HEK293 (cell line): ENCODE measurements at regions of chr6 and their contacts with region 1.

Region 1: DNA sequence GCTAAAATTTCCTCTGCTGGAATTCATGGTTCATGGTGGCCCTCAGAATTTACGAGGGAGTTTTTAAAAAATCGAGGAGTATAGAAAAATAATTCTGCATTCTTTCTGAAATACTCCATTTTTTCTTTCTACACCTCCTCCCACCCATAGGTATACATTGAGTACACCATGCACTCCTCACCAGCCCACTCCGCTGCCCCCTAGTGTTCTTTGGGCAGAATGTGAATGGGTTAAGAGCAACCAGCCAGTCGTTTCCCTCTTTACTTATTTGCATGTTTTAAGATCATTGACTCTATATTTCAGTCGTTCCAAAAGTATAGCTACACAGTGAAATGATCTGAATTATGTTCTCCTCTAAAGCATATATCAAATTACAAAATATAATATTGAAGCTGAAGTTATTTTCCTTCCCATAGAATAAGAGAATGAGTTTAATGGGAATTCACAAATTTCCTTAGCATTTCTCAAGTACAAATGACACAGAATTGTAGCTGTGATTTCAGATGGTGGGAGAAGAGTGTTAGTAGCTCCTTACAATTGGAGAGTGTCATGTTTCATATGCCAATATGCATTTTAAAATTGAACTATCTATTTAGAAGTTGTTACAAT is 977.7 kb upstream of the SLC35B3 start:
- H3K4me3 ChIP-seq: no peak overlapping the region
- H3K27ac ChIP-seq: no peak overlapping the region
- H3K4me1 ChIP-seq: peaks cover 10% of the 10 kb centered on the region
- CTCF ChIP-seq: no peak

Region 2: GRCh38 chr6:9266741-9267140 is 146.3 kb before region 1 on chr6:
- CTCF ChIA-PET with region 1: no interaction called
- POLR2A ChIA-PET with region 1: no interaction called
- H3K4me3 ChIP-seq: no peak overlapping the region
- H3K27ac ChIP-seq: no peak overlapping the region
- H3K4me1 ChIP-seq: no peaks in the 10 kb centered on the region
- CTCF ChIP-seq: no peak

Region 3: DNA sequence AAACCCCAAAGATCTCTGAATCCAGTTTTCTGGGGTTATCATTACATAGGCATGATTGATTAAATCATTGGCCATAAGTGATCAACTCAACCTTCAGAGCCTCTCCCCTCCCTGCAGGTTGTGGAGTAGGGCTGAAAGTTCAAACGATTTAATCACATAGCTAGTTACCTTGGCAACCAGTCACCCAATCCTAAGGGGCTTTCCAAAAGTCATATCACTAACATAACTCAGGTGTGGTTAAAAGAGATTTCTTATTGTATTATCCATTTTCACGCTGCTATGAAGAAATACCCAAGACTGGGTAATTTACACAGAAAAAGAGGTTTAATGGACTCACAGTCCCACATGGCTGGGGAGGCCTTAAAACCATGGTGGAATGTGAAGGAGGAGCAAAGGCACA is 42.6 kb before region 1 on chr6:
- CTCF ChIA-PET with region 1: no interaction called
- POLR2A ChIA-PET with region 1: no interaction called
- H3K4me3 ChIP-seq: no peak overlapping the region
- H3K27ac ChIP-seq: no peak overlapping the region
- H3K4me1 ChIP-seq: no peaks in the 10 kb centered on the region
- CTCF ChIP-seq: no peak

Region 4: GRCh38 chr6:9401960-9402359 is 11.1 kb before region 1 on chr6:
- CTCF ChIA-PET with region 1: interaction called, 11 read pairs
- POLR2A ChIA-PET with region 1: no interaction called
- H3K4me3 ChIP-seq: no peak overlapping the region
- H3K27ac ChIP-seq: no peak overlapping the region
- H3K4me1 ChIP-seq: peaks cover 34% of the 10 kb centered on the region
- CTCF ChIP-seq: no peak

Region 5: DNA sequence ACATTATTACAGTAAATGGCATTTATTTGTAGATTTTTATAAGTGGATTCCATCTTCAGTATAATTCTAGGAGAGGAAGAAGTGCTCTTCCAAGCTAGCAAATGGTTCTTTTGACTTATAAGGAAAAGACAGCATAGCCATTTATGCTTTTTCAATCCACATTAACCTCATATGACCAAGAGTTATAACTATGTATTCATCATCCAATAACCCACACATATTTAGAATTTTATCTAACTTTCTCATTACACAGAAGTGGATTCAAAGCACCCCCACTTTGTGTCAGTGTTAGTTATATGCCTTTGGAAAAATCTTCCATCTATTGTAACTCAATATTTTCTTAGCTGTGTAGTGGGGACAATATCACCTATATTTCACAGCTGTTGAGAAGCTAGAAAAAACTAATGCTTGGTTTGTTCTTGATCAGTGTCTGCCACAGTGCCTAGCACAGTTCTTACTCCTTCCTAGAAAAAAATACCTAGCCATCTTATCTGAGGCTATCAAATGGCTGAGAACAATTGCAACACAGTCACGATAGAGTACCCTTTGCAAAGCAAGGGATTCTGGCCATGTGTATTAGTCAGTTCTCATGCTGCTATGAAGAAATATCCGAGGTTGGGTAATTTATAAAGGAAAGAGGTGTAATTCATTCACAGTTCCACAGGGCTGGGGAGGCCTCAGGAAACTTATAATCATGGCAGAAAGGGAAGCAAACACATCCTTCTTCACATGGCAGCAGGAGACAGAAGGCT is 15.5 kb after region 1 on chr6:
- CTCF ChIA-PET with region 1: interaction called, 28 read pairs
- POLR2A ChIA-PET with region 1: no interaction called
- H3K4me3 ChIP-seq: no peak overlapping the region
- H3K27ac ChIP-seq: no peak overlapping the region
- H3K4me1 ChIP-seq: no peaks in the 10 kb centered on the region
- CTCF ChIP-seq: no peak

Region 6: GRCh38 chr6:9435281-9435680 is 22.2 kb after region 1 on chr6:
- CTCF ChIA-PET with region 1: interaction called, 15 read pairs
- POLR2A ChIA-PET with region 1: no interaction called
- H3K4me3 ChIP-seq: no peak overlapping the region
- H3K27ac ChIP-seq: no peak overlapping the region
- H3K4me1 ChIP-seq: no peaks in the 10 kb centered on the region
- CTCF ChIP-seq: no peak

Region 7: GRCh38 chr6:9620263-9620662 is 207.2 kb after region 1 on chr6:
- CTCF ChIA-PET with region 1: no interaction called
- POLR2A ChIA-PET with region 1: no interaction called
- H3K4me3 ChIP-seq: no peak overlapping the region
- H3K27ac ChIP-seq: no peak overlapping the region
- H3K4me1 ChIP-seq: no peaks in the 10 kb centered on the region
- CTCF ChIP-seq: no peak

Region 8: GRCh38 chr6:10487668-10488327 is 1074.7 kb after region 1 on chr6:
- CTCF ChIA-PET with region 1: no interaction called
- POLR2A ChIA-PET with region 1: no interaction called
- H3K4me3 ChIP-seq: no peak overlapping the region
- H3K27ac ChIP-seq: no peak overlapping the region
- H3K4me1 ChIP-seq: no peaks in the 10 kb centered on the region
- CTCF ChIP-seq: no peak